ENCODE measurements at regions of chr6 and their contacts with region 1.

Region 1: GRCh38 chr6:110944681-110945151 is 13.8 kb upstream of the GTF3C6 start:
- DNase-seq: no peak
- H3K4me3 ChIP-seq: no peak overlapping the region
- H3K27ac ChIP-seq: no peak overlapping the region
- H3K4me1 ChIP-seq: no peaks in the 10 kb centered on the region
- H3K27me3 ChIP-seq: no peaks in the 10 kb centered on the region
- CTCF ChIP-seq: no peak
- EP300 ChIP-seq: no peak
- POLR2A ChIP-seq: no peak

Region 2: DNA sequence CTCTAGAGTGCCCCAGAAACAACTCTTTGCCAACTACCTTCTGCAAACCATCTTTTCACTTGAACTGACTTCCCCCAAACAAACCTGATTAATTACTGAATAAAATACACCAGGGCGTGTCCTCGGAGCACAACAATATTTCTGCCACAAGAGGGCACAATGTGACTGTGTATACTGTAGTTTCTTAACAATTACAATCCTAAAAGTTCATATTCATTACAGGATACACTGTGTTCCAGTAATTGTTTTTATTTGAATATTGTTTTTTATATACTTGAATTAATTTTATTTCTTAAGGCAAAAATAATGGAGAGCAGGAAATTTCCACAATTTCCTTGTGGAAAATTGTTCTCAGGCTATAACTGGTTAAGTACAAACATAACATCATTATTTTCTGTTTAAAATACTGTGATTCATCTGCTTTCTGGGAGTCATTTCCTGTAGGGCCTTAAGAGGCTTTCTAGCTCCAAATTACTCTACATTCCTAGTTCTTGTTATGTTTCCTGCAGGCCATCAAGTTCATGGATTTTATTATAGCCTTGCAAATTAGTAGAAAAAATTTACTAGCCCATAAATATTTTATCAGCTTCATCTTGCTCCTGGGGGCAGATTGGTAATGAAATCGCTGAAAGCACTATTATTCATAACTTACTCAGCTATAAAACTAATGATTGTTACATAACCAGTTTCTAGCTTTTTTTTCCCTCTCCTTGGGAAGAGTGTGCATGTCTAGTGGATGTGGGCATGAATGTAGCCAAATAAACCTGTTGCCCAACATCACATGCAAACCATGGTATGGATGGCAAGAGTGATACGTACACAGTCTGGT is 416.4 kb before region 1 on chr6:
- intact Hi-C with region 1: loop called in 3 of 4 experiments (anchors 5 to 10 kb)
- DNase-seq: peak in 4 of 5 donors; percentile 31 to 60 (median 40)
- H3K4me3 ChIP-seq: no peak overlapping the region
- H3K27ac ChIP-seq: no peak overlapping the region
- H3K4me1 ChIP-seq: no peaks in the 10 kb centered on the region
- H3K27me3 ChIP-seq: no peaks in the 10 kb centered on the region
- CTCF ChIP-seq: peak in 2 of 3 donors; percentile 76 to 82
- EP300 ChIP-seq: no peak
- POLR2A ChIP-seq: no peak

Region 3: DNA sequence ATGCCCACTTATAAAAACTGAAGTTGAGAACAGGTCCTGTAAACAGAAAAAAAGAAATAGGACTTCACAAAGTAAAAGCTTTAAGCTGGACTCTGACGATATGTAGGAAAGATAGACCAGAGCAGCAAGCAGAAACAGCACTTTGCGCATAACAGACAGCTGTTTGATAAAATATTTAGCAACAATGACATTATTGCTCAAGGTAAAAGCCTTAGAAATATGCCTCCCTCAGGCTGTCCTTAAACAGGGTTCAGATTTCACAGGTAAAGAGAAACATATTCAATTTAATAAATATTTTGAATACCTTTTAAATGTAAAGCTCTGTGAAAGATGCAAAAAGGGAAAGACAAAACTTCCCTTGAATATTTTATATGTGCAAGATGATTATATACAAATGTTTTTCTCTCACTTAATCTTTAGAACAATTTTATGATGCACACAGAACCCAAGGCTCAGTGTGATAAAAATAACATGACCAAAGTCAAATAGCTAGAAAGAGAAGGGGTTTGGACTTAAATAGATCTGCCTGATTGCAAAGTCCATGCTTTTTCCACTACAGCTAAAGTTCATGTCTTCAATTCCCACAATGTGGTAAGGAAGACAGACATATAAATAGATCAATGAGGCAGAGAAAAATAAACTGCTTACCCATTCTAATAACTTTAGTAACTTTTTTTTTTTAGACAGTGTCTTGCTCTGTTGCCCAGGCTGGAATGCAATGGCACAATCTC is 273.4 kb before region 1 on chr6:
- intact Hi-C with region 1: loop called in 1 of 4 experiments (anchors 10 kb)
- DNase-seq: no peak
- H3K4me3 ChIP-seq: no peak overlapping the region
- H3K27ac ChIP-seq: no peak overlapping the region
- H3K4me1 ChIP-seq: no peaks in the 10 kb centered on the region
- H3K27me3 ChIP-seq: no peaks in the 10 kb centered on the region
- CTCF ChIP-seq: no peak
- EP300 ChIP-seq: no peak
- POLR2A ChIP-seq: no peak

Region 4: DNA sequence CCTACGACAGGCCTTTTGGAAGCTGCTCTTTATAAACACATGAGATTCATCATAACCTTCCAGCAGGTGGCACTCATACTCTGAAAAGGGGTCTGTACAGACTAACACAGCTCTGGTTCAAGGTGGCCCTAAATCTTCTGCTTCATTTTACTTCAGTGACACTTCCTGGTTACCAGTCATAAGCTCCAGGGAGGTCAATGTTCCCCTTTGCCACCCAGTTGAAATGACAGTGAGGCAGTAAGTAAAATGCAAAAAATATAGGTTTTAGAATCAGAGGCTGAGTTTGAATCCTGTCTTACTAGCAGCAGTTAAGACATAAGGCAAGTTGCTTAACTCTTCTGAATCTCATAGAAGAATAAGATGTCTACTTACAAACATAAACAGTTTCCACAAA is 262.3 kb before region 1 on chr6:
- intact Hi-C with region 1: loop called in 2 of 4 experiments (anchors 5 to 10 kb)
- DNase-seq: peak in 3 of 5 donors; percentile 28 to 66 (median 38)
- H3K4me3 ChIP-seq: no peak overlapping the region
- H3K27ac ChIP-seq: no peak overlapping the region
- H3K4me1 ChIP-seq: peaks cover 1% of the 10 kb centered on the region
- H3K27me3 ChIP-seq: no peaks in the 10 kb centered on the region
- CTCF ChIP-seq: peak; percentile 44 to 72 (median 59)
- EP300 ChIP-seq: no peak
- POLR2A ChIP-seq: no peak

Region 5: GRCh38 chr6:110990840-110991576 is 46.3 kb after region 1 on chr6:
- intact Hi-C with region 1: no loop called
- DNase-seq: no peak
- H3K4me3 ChIP-seq: no peak overlapping the region
- H3K27ac ChIP-seq: no peak overlapping the region
- H3K4me1 ChIP-seq: no peaks in the 10 kb centered on the region
- H3K27me3 ChIP-seq: no peaks in the 10 kb centered on the region
- CTCF ChIP-seq: no peak
- EP300 ChIP-seq: no peak
- POLR2A ChIP-seq: no peak

Measured in ovary (tissue), 10 donors.